Activated CD4-positive, alpha-beta T cell treated with anti-CD3 and anti-CD28 coated beads, Interleukin-2, amount 10 ng/mL, durations not matched to agents 24 days and 14 days (primary cell): ENCODE measurements at regions of chr1 and their contacts with region 1.

Region 1: GRCh38 chr1:185559684-185560331 is 174.4 kb upstream of the HMCN1 start:
- DNase-seq: peak; percentile 92
- H3K4me3 Mint-ChIP-seq: peak overlapping the region; percentile 64
- H3K27ac Mint-ChIP-seq: peak overlapping the region; percentile 68
- H3K4me1 Mint-ChIP-seq: peaks cover 44% of the 10 kb centered on the region
- H3K27me3 Mint-ChIP-seq: no peaks in the 10 kb centered on the region

Region 2: DNA sequence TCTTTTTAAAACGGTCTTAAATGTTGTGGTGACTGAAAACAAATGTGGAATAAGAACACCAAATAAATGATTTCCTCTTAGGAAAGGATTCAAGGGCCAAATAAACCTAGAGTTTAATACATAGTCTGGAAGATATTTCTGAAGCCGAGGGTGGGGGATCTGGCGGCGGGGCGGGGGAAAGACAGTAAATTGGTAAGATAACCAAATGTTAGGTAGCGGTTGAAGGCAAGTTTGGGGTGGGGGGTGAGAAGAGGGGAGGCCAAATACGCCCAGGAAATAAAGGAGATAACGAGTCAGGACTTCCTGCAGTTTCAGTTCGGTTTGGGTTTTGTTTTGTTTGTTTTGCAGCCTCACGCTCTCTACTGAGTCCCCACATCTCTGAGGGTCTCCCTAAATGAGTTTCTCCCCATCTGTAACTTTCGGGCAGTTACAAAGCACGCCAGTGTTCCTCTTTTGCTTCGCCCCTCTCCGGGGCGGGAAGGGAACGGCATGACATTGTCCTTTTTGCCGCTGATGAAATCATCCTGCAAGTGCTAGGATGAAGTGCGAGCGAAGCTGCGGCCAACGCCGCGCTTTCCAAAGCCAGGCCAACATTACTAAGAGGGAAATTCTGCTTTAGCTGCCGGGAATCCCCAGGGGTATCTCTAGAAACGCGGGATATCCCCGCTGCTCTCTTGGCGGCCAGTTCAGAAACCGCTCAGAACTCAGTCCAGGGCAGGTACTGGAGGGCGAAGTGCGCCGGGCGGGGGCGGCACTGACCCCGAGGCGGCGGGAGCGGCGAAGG is 586.3 kb before region 1 on chr1:
- intact Hi-C with region 1: loop called (anchors 5 kb)
- DNase-seq: no peak
- H3K4me3 Mint-ChIP-seq: peak overlapping the region; percentile 91
- H3K27ac Mint-ChIP-seq: peak overlapping the region; percentile 94
- H3K4me1 Mint-ChIP-seq: peaks cover 56% of the 10 kb centered on the region
- H3K27me3 Mint-ChIP-seq: peaks cover 19% of the 10 kb centered on the region

Region 3: DNA sequence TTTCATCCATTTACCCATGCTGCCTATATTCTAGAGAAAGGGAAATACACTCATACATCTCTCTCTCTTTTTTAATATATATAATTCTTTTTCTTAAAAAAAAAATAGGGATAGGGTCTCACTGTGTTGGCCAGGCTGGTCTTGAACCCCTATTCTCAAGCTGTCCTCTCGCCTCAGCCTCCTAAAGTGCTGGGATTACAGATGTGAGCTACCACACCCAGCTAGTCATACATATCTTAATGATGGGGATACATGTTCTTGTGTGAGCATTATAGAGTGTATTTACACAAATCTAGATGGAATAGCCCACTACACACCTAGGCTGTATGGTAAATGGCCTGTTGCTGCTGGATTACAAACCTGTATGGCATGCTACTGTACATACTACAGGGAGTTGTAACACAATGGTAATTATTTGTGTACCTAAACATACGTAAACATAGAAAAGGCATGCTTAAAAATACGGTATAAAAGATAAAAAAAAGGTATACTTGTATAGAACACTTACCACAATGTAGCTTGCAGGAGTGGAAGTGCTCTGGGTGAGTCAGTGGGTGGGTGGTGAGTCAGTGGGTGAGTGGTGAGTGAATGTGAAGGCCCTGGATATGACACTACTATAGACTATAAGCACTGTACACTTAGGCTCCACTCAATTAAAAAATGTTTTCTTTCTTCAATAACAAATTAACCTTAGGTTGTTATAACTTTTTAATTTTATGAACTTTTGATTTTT is 315.6 kb before region 1 on chr1:
- intact Hi-C with region 1: loop called (anchors 5 kb)
- DNase-seq: peak; percentile 61
- H3K4me3 Mint-ChIP-seq: no peak overlapping the region
- H3K27ac Mint-ChIP-seq: no peak overlapping the region
- H3K4me1 Mint-ChIP-seq: peaks cover 9% of the 10 kb centered on the region
- H3K27me3 Mint-ChIP-seq: no peaks in the 10 kb centered on the region

Region 4: GRCh38 chr1:185338719-185339622 is 220.8 kb before region 1 on chr1:
- intact Hi-C with region 1: loop called (anchors 5 kb)
- DNase-seq: peak; percentile 90
- H3K4me3 Mint-ChIP-seq: peak overlapping the region; percentile 57
- H3K27ac Mint-ChIP-seq: peak overlapping the region; percentile 70
- H3K4me1 Mint-ChIP-seq: peaks cover 40% of the 10 kb centered on the region
- H3K27me3 Mint-ChIP-seq: peaks cover 2% of the 10 kb centered on the region

Region 5: GRCh38 chr1:185439727-185440415 is 119.9 kb before region 1 on chr1:
- intact Hi-C with region 1: loop called (anchors 1 kb)
- DNase-seq: peak; percentile 86
- H3K4me3 Mint-ChIP-seq: no peak overlapping the region
- H3K27ac Mint-ChIP-seq: no peak overlapping the region
- H3K4me1 Mint-ChIP-seq: peaks cover 28% of the 10 kb centered on the region
- H3K27me3 Mint-ChIP-seq: no peaks in the 10 kb centered on the region

Region 6: DNA sequence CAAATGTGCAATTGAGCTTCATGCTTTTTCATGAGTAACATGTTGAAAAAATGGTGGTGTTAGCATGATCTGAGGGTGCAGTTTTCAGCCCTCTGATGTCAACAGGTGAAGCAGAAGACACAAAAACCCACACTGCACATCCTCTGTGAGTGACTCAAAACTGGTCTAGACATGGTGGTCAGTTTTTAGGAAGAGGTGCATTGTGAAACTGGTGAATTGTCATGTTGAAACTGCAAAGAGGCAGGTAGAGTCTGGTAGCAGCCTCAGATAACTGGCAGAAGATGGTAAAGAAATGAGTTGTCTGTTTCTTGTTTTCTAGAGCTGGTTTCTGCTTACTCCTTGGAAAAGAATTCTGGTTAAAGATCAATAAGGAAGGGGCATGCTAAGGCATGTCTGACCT is 77.0 kb after region 1 on chr1:
- intact Hi-C with region 1: loop called (anchors 1 kb)
- DNase-seq: peak; percentile 84
- H3K4me3 Mint-ChIP-seq: peak overlapping the region; percentile 18
- H3K27ac Mint-ChIP-seq: peak overlapping the region; percentile 92
- H3K4me1 Mint-ChIP-seq: peaks cover 20% of the 10 kb centered on the region
- H3K27me3 Mint-ChIP-seq: no peaks in the 10 kb centered on the region

Region 7: DNA sequence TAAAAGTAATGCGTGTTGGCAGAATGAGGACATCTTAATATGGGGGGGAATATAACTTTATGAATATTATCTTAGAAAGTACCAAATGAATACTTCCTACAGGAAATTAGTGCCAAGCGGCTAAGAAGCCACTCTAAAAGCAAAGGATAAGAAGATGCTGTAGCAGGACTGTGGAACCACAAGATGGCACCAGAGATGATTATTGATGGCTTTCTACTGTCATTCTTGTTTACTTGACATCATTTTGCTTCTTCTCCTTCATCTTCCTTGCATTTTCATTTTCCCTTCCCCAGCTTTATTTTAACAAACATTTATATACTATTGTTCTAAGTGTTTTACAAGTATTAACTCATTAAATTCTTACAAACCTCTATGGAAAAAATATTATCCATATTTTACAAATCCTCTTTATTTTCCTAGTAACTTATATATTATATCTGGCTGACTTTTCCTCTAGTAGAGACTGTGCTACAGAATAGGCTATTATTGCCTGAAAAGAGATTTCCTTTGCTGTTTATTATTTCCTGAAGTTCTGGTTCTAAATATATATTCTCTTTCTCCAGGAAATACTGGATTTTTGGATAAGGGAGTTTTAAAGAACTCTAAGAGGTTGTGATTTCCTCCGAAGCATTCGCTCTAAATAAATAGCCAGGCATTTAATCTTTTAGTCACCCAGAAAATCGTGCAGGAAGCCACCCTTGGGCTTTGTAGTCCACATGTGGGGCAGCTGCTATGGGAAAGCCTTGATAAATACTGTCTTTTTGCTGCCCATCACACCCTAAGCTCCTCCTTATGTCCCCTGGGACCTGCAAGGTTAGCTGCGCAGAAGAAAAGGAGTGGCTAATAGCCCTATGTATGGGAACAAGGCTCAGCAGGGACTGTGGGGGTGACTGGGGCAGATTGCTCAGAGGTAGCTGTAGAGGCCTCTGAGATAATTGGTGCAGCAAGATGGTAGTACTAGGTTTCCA is 745.5 kb after region 1 on chr1:
- intact Hi-C with region 1: loop called (anchors 10 kb)
- DNase-seq: peak; percentile 79
- H3K4me3 Mint-ChIP-seq: peak overlapping the region; percentile 11
- H3K27ac Mint-ChIP-seq: peak overlapping the region; percentile 91
- H3K4me1 Mint-ChIP-seq: peaks cover 48% of the 10 kb centered on the region
- H3K27me3 Mint-ChIP-seq: no peaks in the 10 kb centered on the region